ENCODE measurements at regions of chr17 and their contacts with region 1.

Region 1: GRCh38 chr17:44279666-44280391 is 11.9 kb upstream of the SLC4A1 start:
- DNase-seq: peak; percentile 74 to 83
- ATAC-seq: peak; percentile 67 to 85 (median 76)
- H3K4me3 ChIP-seq: no peak overlapping the region
- H3K27ac ChIP-seq: peak overlapping the region; percentile 50
- H3K4me1 ChIP-seq: no peaks in the 10 kb centered on the region
- H3K27me3 ChIP-seq: no peaks in the 10 kb centered on the region
- CTCF ChIP-seq: no peak

Region 2: DNA sequence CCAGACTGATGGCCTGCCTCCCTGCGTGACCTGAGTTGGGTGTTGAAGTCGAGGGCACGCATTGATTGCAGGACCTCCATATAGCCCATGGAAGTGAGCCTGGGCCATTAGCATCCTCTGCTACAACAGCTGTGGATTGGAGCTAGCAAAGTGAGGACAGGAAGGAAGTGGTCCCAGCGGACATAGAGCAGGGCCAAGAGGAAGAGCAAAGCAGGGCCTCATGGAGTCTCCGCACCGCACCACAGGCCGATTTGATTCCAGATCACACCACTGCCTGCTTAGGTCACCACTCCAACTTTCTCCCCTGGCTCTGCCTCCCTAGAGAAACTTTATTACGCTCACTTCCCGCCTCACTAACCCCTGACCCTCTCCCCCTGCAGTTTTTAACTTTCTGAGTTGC is 49.7 kb before region 1 on chr17:
- intact Hi-C with region 1: loop called in 1 of 2 experiments (anchors 5 kb)
- DNase-seq: no peak
- ATAC-seq: no peak
- H3K4me3 ChIP-seq: no peak overlapping the region
- H3K27ac ChIP-seq: no peak overlapping the region
- H3K4me1 ChIP-seq: no peaks in the 10 kb centered on the region
- H3K27me3 ChIP-seq: no peaks in the 10 kb centered on the region
- CTCF ChIP-seq: no peak

Region 3: DNA sequence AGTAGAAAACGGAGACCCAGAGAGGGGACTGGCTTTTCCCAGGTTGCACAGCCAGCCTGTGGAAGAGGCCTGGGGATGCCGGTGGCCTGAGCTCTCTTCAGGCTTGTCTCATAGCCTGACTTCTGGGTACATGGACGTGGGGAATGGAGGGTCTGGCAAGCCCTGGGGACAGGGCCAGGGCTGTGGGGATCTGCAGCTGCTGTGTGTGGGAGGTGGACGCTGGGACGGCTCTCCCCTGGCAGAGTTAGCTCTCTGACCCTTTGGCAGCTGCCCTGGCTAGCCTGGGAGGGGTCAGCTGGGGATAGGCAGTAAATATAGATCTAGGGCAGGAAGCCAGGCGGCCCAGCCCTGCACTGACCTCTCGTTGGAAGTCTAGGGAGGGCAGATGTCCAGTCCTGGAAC is 32.4 kb before region 1 on chr17:
- intact Hi-C with region 1: loop called in 1 of 2 experiments (anchors 5 kb)
- DNase-seq: peak; percentile 37 to 77
- ATAC-seq: peak; percentile 72 to 94 (median 84)
- H3K4me3 ChIP-seq: no peak overlapping the region
- H3K27ac ChIP-seq: no peak overlapping the region
- H3K4me1 ChIP-seq: peaks cover 25% of the 10 kb centered on the region
- H3K27me3 ChIP-seq: no peaks in the 10 kb centered on the region
- CTCF ChIP-seq: no peak

Region 4: DNA sequence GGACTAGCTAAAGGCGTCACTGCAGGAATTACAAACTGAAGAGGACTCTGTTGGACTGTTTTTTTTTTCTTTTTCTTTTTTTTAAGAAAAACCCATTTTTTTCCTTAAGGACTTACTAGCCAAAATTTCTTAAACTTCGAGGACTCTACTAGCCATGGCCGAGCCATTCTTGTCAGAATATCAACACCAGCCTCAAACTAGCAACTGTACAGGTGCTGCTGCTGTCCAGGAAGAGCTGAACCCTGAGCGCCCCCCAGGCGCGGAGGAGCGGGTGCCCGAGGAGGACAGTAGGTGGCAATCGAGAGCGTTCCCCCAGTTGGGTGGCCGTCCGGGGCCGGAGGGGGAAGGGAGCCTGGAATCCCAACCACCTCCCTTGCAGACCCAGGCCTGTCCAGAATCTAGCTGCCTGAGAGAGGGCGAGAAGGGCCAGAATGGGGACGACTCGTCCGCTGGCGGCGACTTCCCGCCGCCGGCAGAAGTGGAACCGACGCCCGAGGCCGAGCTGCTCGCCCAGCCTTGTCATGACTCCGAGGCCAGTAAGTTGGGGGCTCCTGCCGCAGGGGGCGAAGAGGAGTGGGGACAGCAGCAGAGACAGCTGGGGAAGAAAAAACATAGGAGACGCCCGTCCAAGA is 869.3 kb after region 1 on chr17:
- intact Hi-C with region 1: no loop called
- DNase-seq: peak; percentile 89 to 95
- ATAC-seq: peak; percentile 62 to 72 (median 64)
- H3K4me3 ChIP-seq: peak overlapping the region; percentile 76
- H3K27ac ChIP-seq: peak overlapping the region; percentile 88
- H3K4me1 ChIP-seq: peaks cover 23% of the 10 kb centered on the region
- H3K27me3 ChIP-seq: no peaks in the 10 kb centered on the region
- CTCF ChIP-seq: peak; percentile 85

Measured in psoas muscle (tissue), 8 donors.